ENCODE measurements at regions of chr1 and their contacts with region 1.

Region 1: DNA sequence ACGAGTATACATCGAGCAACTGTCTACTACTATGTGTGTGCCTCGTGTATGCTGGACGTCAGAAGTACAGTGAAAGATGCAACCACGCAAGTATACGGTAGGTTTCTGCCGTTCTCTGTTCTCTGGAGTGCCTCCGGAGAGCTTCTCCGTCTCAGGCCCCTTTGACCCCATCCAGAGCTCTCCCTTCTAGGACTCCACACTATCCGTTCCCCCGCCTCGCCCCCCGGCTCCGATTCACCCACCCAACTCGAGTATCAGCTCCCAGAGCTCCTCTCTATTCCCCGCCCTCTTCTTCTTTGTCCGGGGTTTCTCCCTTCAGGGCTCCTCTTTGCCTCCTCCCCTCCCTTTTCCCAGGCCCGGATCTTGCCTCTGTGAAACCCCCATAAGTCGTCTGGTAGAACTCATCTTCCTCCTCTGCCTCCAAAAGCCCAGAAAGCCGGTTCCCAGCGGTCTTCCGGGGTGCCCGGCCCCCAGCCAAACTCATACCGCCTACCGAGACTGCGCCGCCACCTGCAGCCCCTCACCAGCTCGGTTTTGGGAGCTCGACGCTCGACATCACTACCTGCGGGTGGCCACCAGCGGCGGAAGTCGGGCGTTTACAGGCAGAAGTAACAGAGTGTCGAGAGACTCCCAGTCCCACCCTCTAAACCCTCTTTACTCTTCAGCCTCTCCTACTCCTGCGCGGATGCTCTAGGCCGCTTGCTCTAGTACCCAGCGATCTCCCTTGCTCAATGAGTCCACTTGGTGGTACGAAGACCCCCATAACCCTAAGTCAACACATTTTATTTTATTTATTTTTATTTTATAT is at the start of gene VPS72:
- DNase-seq: peak; percentile 89
- H3K4me3 Mint-ChIP-seq: peak within 1 kb of the TSS; percentile 100
- H3K27ac Mint-ChIP-seq: peak within 1 kb of the TSS; percentile 95
- H3K4me1 Mint-ChIP-seq: peaks cover 35% of the 10 kb centered on the region
- H3K27me3 Mint-ChIP-seq: peaks cover 3% of the 10 kb centered on the region
- total RNA-seq, gene VPS72: 76.1 to 78.8 TPM

Region 2: GRCh38 chr1:151059078-151059907 is 130.5 kb before region 1 on chr1 and contains the start of gene CDC42SE1:
- CTCF ChIA-PET with region 1: interaction called, 3 read pairs
- POLR2A ChIA-PET with region 1: interaction called, 17 read pairs
- DNase-seq: peak; percentile 87
- H3K4me3 Mint-ChIP-seq: peak within 1 kb of the TSS; percentile 97
- H3K27ac Mint-ChIP-seq: peak within 1 kb of the TSS; percentile 97
- H3K4me1 Mint-ChIP-seq: peaks cover 51% of the 10 kb centered on the region
- H3K27me3 Mint-ChIP-seq: no peaks in the 10 kb centered on the region
- total RNA-seq, gene CDC42SE1: 345 to 347 TPM

Region 3: DNA sequence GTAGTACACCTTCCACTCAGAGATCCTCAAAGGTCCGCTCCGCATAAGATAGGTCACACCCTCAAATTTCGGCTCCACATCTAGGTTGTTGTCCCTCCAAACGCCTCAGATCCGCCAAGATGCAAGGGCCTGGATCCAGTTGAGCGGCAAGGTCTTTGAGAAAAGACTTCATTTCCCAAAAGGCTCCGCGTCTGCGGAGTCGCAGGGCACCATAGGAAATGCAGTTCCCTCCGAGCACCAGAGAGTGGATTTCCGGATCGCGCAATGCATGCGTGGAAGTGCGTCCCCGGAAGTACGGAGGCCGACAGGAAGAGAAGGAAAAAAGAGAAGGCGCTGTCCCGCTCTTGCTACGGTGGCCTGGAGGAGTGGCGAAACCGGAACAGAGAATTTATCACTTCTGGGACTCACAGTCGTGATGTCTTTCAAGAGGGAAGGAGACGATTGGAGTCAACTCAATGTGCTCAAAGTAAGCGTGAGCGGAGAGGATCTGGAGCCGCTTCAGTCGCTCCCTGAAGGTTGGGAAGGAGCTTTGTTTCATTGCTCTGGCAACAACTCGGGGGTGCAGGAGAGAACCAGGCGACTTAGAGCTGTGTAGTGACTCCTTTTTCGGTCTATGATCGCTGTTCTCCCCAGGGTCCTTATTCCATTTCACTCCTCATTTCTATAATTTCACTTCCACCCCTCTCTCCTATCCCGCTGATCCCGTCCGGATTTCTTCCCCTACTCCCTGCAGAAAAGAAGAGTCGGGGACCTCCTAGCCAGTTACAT is 23.9 kb before region 1 on chr1 and contains the starts of genes LYSMD1 and SCNM1:
- CTCF ChIA-PET with region 1: no interaction called
- POLR2A ChIA-PET with region 1: interaction called, 37 read pairs
- DNase-seq: peak; percentile 98
- H3K4me3 Mint-ChIP-seq: peak within 1 kb of the TSS; percentile 85
- H3K27ac Mint-ChIP-seq: peak within 1 kb of the TSS; percentile 83
- H3K4me1 Mint-ChIP-seq: peaks cover 58% of the 10 kb centered on the region
- H3K27me3 Mint-ChIP-seq: no peaks in the 10 kb centered on the region
- total RNA-seq, gene LYSMD1: 2.0 to 2.1 TPM
- total RNA-seq, gene SCNM1: 63.5 to 67.9 TPM

Region 4: GRCh38 chr1:151254217-151255213 is 64.7 kb after region 1 on chr1 and contains the start of gene PSMD4:
- CTCF ChIA-PET with region 1: interaction called, 9 read pairs
- POLR2A ChIA-PET with region 1: interaction called, 14 read pairs
- DNase-seq: peak; percentile 95
- H3K4me3 Mint-ChIP-seq: peak within 1 kb of the TSS; percentile 87
- H3K27ac Mint-ChIP-seq: peak within 1 kb of the TSS; percentile 83
- H3K4me1 Mint-ChIP-seq: peaks cover 29% of the 10 kb centered on the region
- H3K27me3 Mint-ChIP-seq: no peaks in the 10 kb centered on the region
- total RNA-seq, gene PSMD4: 178 to 188 TPM

Region 5: DNA sequence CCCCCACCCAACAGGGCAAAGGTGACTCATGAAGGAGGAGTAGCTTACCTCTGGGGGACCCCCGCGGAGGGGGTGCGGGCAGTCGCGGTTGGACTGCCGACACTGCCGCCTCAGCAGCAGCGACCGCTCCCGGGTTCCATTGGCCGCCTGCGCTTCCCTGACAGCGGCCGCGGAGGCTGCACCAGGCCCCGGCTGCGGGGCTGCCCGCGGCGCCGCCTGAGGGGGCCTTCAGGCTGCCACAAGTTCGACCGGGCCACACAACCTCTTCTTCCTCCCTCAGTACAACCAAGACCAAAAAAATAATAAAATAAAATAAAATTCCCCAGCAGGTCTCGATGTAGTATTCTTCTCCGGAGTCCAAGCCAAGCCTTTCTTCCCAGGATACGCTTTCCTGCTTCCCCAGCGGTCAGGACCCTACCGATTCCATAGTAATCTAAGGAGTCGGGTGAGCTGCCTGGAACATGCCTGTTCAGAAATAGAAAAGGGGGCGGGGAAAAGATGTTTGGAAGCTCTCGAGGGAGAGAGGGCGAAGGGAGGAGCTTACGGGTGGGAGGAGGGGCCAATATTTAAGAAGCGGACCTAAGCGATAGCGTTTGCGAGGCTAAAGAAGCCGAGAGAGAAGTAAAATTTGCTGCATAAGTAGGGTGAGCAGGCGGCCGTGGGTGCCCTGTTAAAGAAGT is 137.5 kb after region 1 on chr1 and contains the start of gene PI4KB:
- CTCF ChIA-PET with region 1: no interaction called
- POLR2A ChIA-PET with region 1: interaction called, 13 read pairs
- DNase-seq: peak; percentile 93
- H3K4me3 Mint-ChIP-seq: peak within 1 kb of the TSS; percentile 98
- H3K27ac Mint-ChIP-seq: peak within 1 kb of the TSS; percentile 95
- H3K4me1 Mint-ChIP-seq: peaks cover 36% of the 10 kb centered on the region
- H3K27me3 Mint-ChIP-seq: no peaks in the 10 kb centered on the region
- total RNA-seq, gene PI4KB: 71.2 to 72.9 TPM

Measured in activated CD4-positive, alpha-beta memory T cell treated with anti-CD3 and anti-CD28 coated beads, Interleukin-2, amount 10 ng/mL, durations not matched to agents 7 days and 5 days (primary cell).